Activated CD4-positive, alpha-beta T cell treated with anti-CD3 and anti-CD28 coated beads, Interleukin-2, amount 10 ng/mL, durations not matched to agents 24 days and 14 days (primary cell): ENCODE measurements at regions of chrX and their contacts with region 1.

Region 1: DNA sequence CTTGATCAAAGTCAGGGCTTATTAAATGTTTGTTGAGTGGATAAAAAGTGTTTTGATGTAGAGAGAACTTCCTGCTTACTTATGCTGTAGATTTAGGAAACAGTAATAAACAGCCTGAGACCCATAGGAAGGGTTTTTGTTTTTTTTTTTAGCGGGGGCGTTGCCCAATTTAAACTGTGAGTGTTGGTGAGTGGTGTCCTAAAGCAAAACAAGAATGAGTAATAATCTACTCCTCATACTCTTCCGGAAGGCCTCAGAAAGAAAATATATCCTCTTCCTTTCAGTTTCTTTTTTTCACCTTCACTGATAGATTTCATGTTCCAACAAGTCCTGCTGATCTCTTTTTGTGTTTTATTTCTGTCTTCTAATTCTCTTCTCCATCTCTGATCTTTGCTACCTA is 104.4 kb upstream of the SCML1 start:
- DNase-seq: peak; percentile 65
- H3K4me3 Mint-ChIP-seq: peak overlapping the region; percentile 49
- H3K27ac Mint-ChIP-seq: peak overlapping the region; percentile 68
- H3K4me1 Mint-ChIP-seq: peaks cover 5% of the 10 kb centered on the region
- H3K27me3 Mint-ChIP-seq: no peaks in the 10 kb centered on the region

Region 2: GRCh38 chrX:17559728-17560379 is 73.1 kb before region 1 on chrX:
- intact Hi-C with region 1: no loop called
- DNase-seq: no peak
- H3K4me3 Mint-ChIP-seq: no peak overlapping the region
- H3K27ac Mint-ChIP-seq: no peak overlapping the region
- H3K4me1 Mint-ChIP-seq: peaks cover 5% of the 10 kb centered on the region
- H3K27me3 Mint-ChIP-seq: peaks cover 2% of the 10 kb centered on the region

Region 3: GRCh38 chrX:17669458-17669857 is 36.5 kb after region 1 on chrX:
- intact Hi-C with region 1: no loop called
- DNase-seq: no peak
- H3K4me3 Mint-ChIP-seq: peak overlapping the region; percentile 22
- H3K27ac Mint-ChIP-seq: peak overlapping the region; percentile 78
- H3K4me1 Mint-ChIP-seq: peaks cover 14% of the 10 kb centered on the region
- H3K27me3 Mint-ChIP-seq: no peaks in the 10 kb centered on the region

Region 4: GRCh38 chrX:17682259-17682658 is 49.3 kb after region 1 on chrX:
- intact Hi-C with region 1: loop called (anchors 2 kb)
- DNase-seq: no peak
- H3K4me3 Mint-ChIP-seq: peak overlapping the region; percentile 43
- H3K27ac Mint-ChIP-seq: peak overlapping the region; percentile 70
- H3K4me1 Mint-ChIP-seq: peaks cover 21% of the 10 kb centered on the region
- H3K27me3 Mint-ChIP-seq: no peaks in the 10 kb centered on the region